AG04449 (cell line): ENCODE measurements at regions of chr10 and their contacts with region 1.

Region 1: GRCh38 chr10:30392564-30392990 is 41.4 kb upstream of the MAP3K8 start:
- DNase-seq: no peak
- H3K4me3 ChIP-seq: no peak overlapping the region
- CTCF ChIP-seq: peak; percentile 95

Region 2: DNA sequence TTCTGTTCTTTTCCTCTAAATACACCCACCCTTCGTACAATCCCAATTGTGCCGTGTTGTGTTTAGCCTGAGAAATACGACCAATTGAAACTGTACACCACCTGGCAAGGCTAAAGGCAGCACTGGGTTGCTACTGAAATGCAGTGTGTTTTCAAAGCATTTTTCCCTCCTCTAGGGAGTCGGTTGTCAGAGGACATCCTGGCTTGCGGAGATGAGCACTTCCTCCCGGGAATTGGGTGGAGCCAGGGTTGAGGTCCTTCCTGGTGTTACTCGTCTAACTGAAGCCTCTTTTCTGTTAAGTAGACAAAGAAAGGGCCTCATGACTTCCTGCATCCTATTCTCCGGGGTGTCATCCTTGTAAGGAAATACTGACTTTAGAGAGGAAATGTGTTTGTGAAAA is 177.0 kb before region 1 on chr10:
- CTCF ChIA-PET with region 1: no interaction called
- POLR2A ChIA-PET with region 1: no interaction called
- DNase-seq: no peak
- H3K4me3 ChIP-seq: no peak overlapping the region
- CTCF ChIP-seq: no peak

Region 3: GRCh38 chr10:30284865-30285594 is 107.5 kb before region 1 on chr10:
- CTCF ChIA-PET with region 1: no interaction called
- POLR2A ChIA-PET with region 1: no interaction called
- DNase-seq: no peak
- H3K4me3 ChIP-seq: no peak overlapping the region
- CTCF ChIP-seq: no peak

Region 4: GRCh38 chr10:30300728-30301127 is 91.8 kb before region 1 on chr10:
- CTCF ChIA-PET with region 1: no interaction called
- POLR2A ChIA-PET with region 1: no interaction called
- DNase-seq: no peak
- H3K4me3 ChIP-seq: no peak overlapping the region
- CTCF ChIP-seq: no peak

Region 5: GRCh38 chr10:30374353-30374752 is 18.2 kb before region 1 on chr10:
- CTCF ChIA-PET with region 1: interaction called, 16 read pairs
- POLR2A ChIA-PET with region 1: no interaction called
- DNase-seq: no peak
- H3K4me3 ChIP-seq: no peak overlapping the region
- CTCF ChIP-seq: no peak

Region 6: GRCh38 chr10:30782537-30783461 is 390.2 kb after region 1 on chr10:
- CTCF ChIA-PET with region 1: no interaction called
- POLR2A ChIA-PET with region 1: no interaction called
- DNase-seq: no peak
- H3K4me3 ChIP-seq: no peak overlapping the region
- CTCF ChIP-seq: no peak